CD14-positive monocyte (primary cell): ENCODE measurements at regions of chr11 and their contacts with region 1.

Region 1: GRCh38 chr11:9003573-9004309 is at the start of gene NRIP3:
- DNase-seq: peak; percentile 79 to 88 (median 80)
- H3K4me3 ChIP-seq: peak within 1 kb of the TSS; percentile 25 to 87 (median 72)
- H3K4me3 Mint-ChIP-seq: peak within 1 kb of the TSS; percentile 88 to 93
- H3K27ac ChIP-seq: peak within 1 kb of the TSS in 1 of 2 donors; percentile 56
- H3K27ac Mint-ChIP-seq: peak within 1 kb of the TSS in 6 of 7 donors; percentile 79 to 94 (median 86)
- H3K4me1 ChIP-seq: peaks cover 33 to 37% of the 10 kb centered on the region in 2 donors
- H3K4me1 Mint-ChIP-seq: peaks cover 25% of the 10 kb centered on the region
- H3K27me3 ChIP-seq: peaks cover 27 to 38% of the 10 kb centered on the region in 2 donors
- H3K27me3 Mint-ChIP-seq: peaks cover 26 to 38% (median 31%) of the 10 kb centered on the region in 3 donors
- CTCF ChIP-seq: no peak
- polyA plus RNA-seq, gene NRIP3: 0.28 to 4.8 (median 1.0) TPM

Region 2: DNA sequence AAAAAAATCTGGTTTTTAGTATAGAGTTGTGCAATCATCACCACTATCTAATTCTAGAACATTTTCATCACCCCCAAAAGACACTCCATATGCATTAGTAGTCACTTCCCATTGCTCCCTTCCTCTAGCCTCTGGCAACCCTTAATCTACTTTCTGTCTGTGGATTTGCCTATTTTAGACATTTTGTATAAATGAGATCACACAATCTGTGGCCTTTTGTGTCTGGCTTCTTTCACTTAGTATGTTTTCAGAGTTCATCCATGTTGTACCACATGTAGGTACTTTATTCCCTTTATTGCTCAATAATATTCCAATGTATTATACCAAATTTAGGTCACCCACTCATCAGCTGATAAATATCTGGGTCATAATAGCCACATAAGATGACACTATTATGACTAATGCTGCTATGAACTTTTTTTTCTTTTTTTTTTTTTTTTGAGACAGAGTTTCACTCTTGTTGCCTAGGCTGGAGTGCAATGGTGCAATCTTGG is 155.2 kb after region 1 on chr11:
- intact Hi-C with region 1: loop called in 1 of 2 experiments (anchors 10 kb)
- DNase-seq: peak; percentile 46 to 79 (median 75)
- H3K4me3 ChIP-seq: no peak overlapping the region
- H3K4me3 Mint-ChIP-seq: peak overlapping the region in 1 of 2 donors; percentile 1
- H3K27ac ChIP-seq: peak overlapping the region; percentile 36 to 86
- H3K27ac Mint-ChIP-seq: peak overlapping the region; percentile 86 to 98 (median 96)
- H3K4me1 ChIP-seq: peaks cover 37 to 43% of the 10 kb centered on the region in 2 donors
- H3K4me1 Mint-ChIP-seq: peaks cover 41% of the 10 kb centered on the region
- H3K27me3 ChIP-seq: no peaks in the 10 kb centered on the region
- H3K27me3 Mint-ChIP-seq: peaks cover 0 to 3% (median 0%) of the 10 kb centered on the region in 3 donors
- CTCF ChIP-seq: no peak